H1 (cell line): ENCODE measurements at regions of chr1 and their contacts with region 1.

Region 1: DNA sequence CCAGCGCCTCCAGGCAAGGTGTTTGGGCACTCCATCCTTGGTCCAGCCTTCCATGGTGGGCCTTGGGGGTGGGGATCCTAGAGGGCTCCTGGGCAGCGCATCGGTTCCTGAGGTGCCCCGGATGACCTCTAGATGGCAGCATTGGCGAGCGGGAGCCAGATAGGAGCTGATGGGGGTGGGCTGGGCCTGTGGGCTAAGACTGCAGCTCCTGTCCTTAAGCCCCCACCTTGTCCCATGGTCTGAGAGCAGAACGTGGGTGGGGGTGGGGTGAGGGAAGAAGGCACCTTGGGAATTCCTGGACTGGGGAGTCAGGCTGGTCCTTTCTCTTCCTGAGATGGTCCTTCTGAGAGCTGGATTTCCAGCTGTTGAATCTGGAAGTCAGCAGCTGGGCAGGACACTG is 93.4 kb upstream of the CSF3R start:
- DNase-seq: peak; percentile 49 to 93
- H3K4me3 ChIP-seq: peak overlapping the region in 1 of 4 experiments; percentile 10; a peak in 1 of 8 replicates
- H3K27ac ChIP-seq: no peak overlapping the region
- H3K4me1 ChIP-seq: peaks cover 0 to 21% (median 10%) of the 10 kb centered on the region in 4 experiments; a peak in 6 of 7 replicates
- H3K27me3 ChIP-seq: no peaks in the 10 kb centered on the region; a peak in 1 of 7 replicates
- CTCF ChIP-seq: peak; percentile 85 to 93 (median 90)
- EP300 ChIP-seq: no peak
- POLR2A ChIP-seq: no peak
- RAD21 ChIP-seq: peak; percentile 94 to 97

Region 2: GRCh38 chr1:36553591-36554322 is 22.4 kb before region 1 on chr1:
- CTCF ChIA-PET with region 1: interaction called, 125 read pairs
- POLR2A ChIA-PET with region 1: no interaction called
- DNase-seq: peak; percentile 58 to 93
- H3K4me3 ChIP-seq: no peak overlapping the region
- H3K27ac ChIP-seq: no peak overlapping the region
- H3K4me1 ChIP-seq: no peaks in the 10 kb centered on the region
- H3K27me3 ChIP-seq: peaks cover 0 to 5% (median 2%) of the 10 kb centered on the region in 4 experiments; a peak in 4 of 7 replicates
- CTCF ChIP-seq: peak; percentile 85 to 97 (median 91)
- EP300 ChIP-seq: no peak
- POLR2A ChIP-seq: no peak
- RAD21 ChIP-seq: peak; percentile 97

Region 3: GRCh38 chr1:36594023-36594422 is 17.9 kb after region 1 on chr1:
- CTCF ChIA-PET with region 1: interaction called, 71 read pairs
- POLR2A ChIA-PET with region 1: interaction called, 7 read pairs
- DNase-seq: no peak
- H3K4me3 ChIP-seq: no peak overlapping the region
- H3K27ac ChIP-seq: no peak overlapping the region
- H3K4me1 ChIP-seq: peaks cover 0 to 10% (median 2%) of the 10 kb centered on the region in 4 experiments; a peak in 2 of 7 replicates
- H3K27me3 ChIP-seq: no peaks in the 10 kb centered on the region; a peak in 1 of 7 replicates
- CTCF ChIP-seq: no peak
- EP300 ChIP-seq: no peak
- POLR2A ChIP-seq: no peak
- RAD21 ChIP-seq: no peak

Region 4: DNA sequence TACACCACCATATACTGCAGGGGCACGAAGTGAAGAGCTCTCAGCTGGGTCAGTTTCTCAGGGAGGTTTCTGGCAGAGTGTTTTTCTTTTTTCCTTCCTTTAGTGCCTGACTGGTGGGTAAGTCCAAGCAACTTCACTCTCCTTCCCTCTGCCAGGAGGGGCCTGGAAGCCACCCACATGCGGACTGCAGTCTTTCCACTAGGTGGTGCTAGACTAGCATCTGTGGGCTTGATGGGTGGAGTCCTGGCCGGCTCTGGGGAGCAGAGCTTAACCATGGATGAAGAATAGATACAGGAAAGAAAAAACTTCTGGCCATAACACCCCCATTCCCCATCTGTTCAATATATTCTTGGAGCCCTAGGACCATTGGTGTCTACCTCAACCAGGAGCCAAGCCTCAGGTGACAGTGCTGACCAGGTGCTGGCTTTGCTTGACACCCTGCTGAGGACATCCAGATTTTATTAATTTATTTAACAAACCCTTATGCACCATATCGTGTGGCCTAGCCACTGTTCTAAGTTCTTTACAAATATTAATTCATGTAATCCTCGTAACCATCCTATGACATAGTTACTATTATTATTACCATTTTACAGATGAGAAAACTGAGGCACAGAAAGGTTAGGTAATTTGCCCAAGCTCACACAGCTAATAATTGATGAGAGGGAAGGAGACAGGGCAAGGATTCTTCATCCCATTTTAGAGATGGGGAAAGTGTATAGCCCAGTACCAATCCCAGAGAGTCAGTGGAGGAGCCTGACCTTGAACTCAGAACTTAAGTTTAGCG is 33.3 kb after region 1 on chr1:
- CTCF ChIA-PET with region 1: interaction called, 29 read pairs
- POLR2A ChIA-PET with region 1: no interaction called
- DNase-seq: peak; percentile 47 to 85
- H3K4me3 ChIP-seq: no peak overlapping the region
- H3K27ac ChIP-seq: no peak overlapping the region
- H3K4me1 ChIP-seq: no peaks in the 10 kb centered on the region; a peak in 1 of 7 replicates
- H3K27me3 ChIP-seq: peaks cover 0 to 2% (median 0%) of the 10 kb centered on the region in 4 experiments; a peak in 1 of 7 replicates
- CTCF ChIP-seq: peak; percentile 92 to 95 (median 93)
- EP300 ChIP-seq: no peak
- POLR2A ChIP-seq: no peak
- RAD21 ChIP-seq: peak; percentile 96 to 97

Region 5: GRCh38 chr1:36650200-36651065 is 74.3 kb after region 1 on chr1:
- CTCF ChIA-PET with region 1: interaction called, 16 read pairs
- POLR2A ChIA-PET with region 1: no interaction called
- DNase-seq: peak; percentile 29 to 96
- H3K4me3 ChIP-seq: no peak overlapping the region
- H3K27ac ChIP-seq: no peak overlapping the region
- H3K4me1 ChIP-seq: peaks cover 0 to 3% (median 3%) of the 10 kb centered on the region in 4 experiments; a peak in 3 of 7 replicates
- H3K27me3 ChIP-seq: peaks cover 0 to 2% (median 0%) of the 10 kb centered on the region in 4 experiments; a peak in 2 of 7 replicates
- CTCF ChIP-seq: peak; percentile 85 to 91 (median 85)
- EP300 ChIP-seq: no peak
- POLR2A ChIP-seq: no peak
- RAD21 ChIP-seq: peak; percentile 70 to 77

Region 6: GRCh38 chr1:36781098-36781497 is 205.0 kb after region 1 on chr1:
- CTCF ChIA-PET with region 1: no interaction called
- POLR2A ChIA-PET with region 1: no interaction called
- DNase-seq: no peak
- H3K4me3 ChIP-seq: no peak overlapping the region
- H3K27ac ChIP-seq: no peak overlapping the region
- H3K4me1 ChIP-seq: peaks cover 0 to 2% (median under 1%) of the 10 kb centered on the region in 4 experiments; a peak in 2 of 7 replicates
- H3K27me3 ChIP-seq: no peaks in the 10 kb centered on the region
- CTCF ChIP-seq: no peak
- EP300 ChIP-seq: no peak
- POLR2A ChIP-seq: no peak
- RAD21 ChIP-seq: no peak

Region 7: DNA sequence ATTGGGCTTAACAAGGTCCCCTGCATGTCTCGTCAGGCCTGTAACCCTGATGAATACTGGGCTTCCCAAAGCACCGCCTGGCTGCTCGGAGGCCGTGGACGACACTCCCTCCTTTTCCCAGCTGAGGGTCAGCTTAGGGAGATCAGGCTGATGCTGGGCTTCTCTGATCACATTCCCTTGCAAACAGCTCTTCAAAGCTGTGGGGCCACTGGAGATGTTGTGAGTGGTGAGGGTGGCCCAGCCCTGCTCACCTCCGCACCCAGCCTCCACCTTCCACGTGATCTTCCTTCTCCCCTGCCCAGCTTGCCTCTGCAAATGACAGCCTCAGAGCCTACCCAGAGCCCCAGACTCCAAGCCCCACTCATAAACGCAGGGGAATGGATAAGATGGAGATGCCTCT is 262.8 kb after region 1 on chr1:
- CTCF ChIA-PET with region 1: no interaction called
- POLR2A ChIA-PET with region 1: no interaction called
- DNase-seq: no peak
- H3K4me3 ChIP-seq: no peak overlapping the region
- H3K27ac ChIP-seq: no peak overlapping the region
- H3K4me1 ChIP-seq: peaks cover 0 to 9% (median 4%) of the 10 kb centered on the region in 4 experiments; a peak in 5 of 7 replicates
- H3K27me3 ChIP-seq: no peaks in the 10 kb centered on the region
- CTCF ChIP-seq: no peak
- EP300 ChIP-seq: no peak
- POLR2A ChIP-seq: no peak
- RAD21 ChIP-seq: no peak

Region 8: GRCh38 chr1:37035796-37036666 is 459.9 kb after region 1 on chr1:
- CTCF ChIA-PET with region 1: interaction called, 10 read pairs
- POLR2A ChIA-PET with region 1: no interaction called
- DNase-seq: peak in 1 of 2 experiments; percentile 75
- H3K4me3 ChIP-seq: peak overlapping the region; percentile 1 to 67 (median 28); a peak in 7 of 8 replicates
- H3K27ac ChIP-seq: no peak overlapping the region
- H3K4me1 ChIP-seq: peaks cover 20 to 64% (median 46%) of the 10 kb centered on the region in 4 experiments
- H3K27me3 ChIP-seq: peaks cover 35 to 55% (median 48%) of the 10 kb centered on the region in 4 experiments
- CTCF ChIP-seq: peak; percentile 39 to 43 (median 42)
- EP300 ChIP-seq: no peak
- POLR2A ChIP-seq: no peak
- RAD21 ChIP-seq: peak; percentile 26 to 37; a peak in 3 of 4 replicates